ENCODE measurements at regions of chr4 and their contacts with region 1.

Region 1: GRCh38 chr4:169270810-169271691 is at the start of gene SH3RF1:
- DNase-seq: peak; percentile 82
- ATAC-seq: peak; percentile 88
- H3K4me3 ChIP-seq: peak within 1 kb of the TSS; percentile 94
- H3K27ac ChIP-seq: peak within 1 kb of the TSS; percentile 84
- H3K4me1 ChIP-seq: peaks cover 9% of the 10 kb centered on the region
- H3K27me3 ChIP-seq: no peaks in the 10 kb centered on the region
- CTCF ChIP-seq: peak; percentile 45
- POLR2A ChIP-seq: peak; percentile 95
- RAD21 ChIP-seq: peak; percentile 53
- total RNA-seq, gene SH3RF1: 29.8 and 30.0 TPM in 2 replicates

Region 2: GRCh38 chr4:169010125-169011023 is 260.7 kb before region 1 on chr4 and contains the start of gene CBR4:
- CTCF ChIA-PET with region 1: interaction called, 4 read pairs
- POLR2A ChIA-PET with region 1: interaction called, 10 read pairs
- dilution Hi-C with region 1: no loop called
- in situ Hi-C with region 1: loop called (anchors 10 kb)
- intact Hi-C with region 1: no loop called
- DNase-seq: peak; percentile 99
- ATAC-seq: peak; percentile 98
- H3K4me3 ChIP-seq: peak within 1 kb of the TSS; percentile 78
- H3K27ac ChIP-seq: peak within 1 kb of the TSS; percentile 87
- H3K4me1 ChIP-seq: peaks cover 4% of the 10 kb centered on the region
- H3K27me3 ChIP-seq: no peaks in the 10 kb centered on the region
- CTCF ChIP-seq: peak; percentile 40
- POLR2A ChIP-seq: peak; percentile 86
- RAD21 ChIP-seq: peak; percentile 28
- total RNA-seq, gene CBR4: 4.5 and 9.2 TPM in 2 replicates

Region 3: DNA sequence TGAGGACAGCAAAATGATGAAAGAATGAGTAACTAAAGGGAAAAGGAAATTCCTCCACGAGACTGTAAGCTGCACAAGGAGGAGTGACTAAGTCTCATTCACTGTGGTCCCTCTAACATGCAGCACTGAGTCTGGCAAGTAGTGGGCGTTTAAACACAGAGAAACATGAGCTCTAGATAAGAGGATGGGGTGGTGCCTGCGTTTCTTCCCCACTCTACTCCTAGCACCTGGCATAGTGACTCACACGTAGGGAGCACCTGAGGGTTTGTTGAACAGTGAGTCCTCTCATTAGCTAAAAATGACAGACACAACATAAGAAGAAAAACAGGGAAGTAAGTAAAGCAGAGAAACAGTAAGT is 155.2 kb before region 1 on chr4:
- CTCF ChIA-PET with region 1: interaction called, 3 read pairs
- POLR2A ChIA-PET with region 1: no interaction called
- dilution Hi-C with region 1: no loop called
- in situ Hi-C with region 1: no loop called
- intact Hi-C with region 1: loop called (anchors 2 kb)
- DNase-seq: peak; percentile 99
- ATAC-seq: peak; percentile 97
- H3K4me3 ChIP-seq: no peak overlapping the region
- H3K27ac ChIP-seq: peak overlapping the region; percentile 71; the same call in 1 of the 2 replicates
- H3K4me1 ChIP-seq: peaks cover 18% of the 10 kb centered on the region
- H3K27me3 ChIP-seq: no peaks in the 10 kb centered on the region
- CTCF ChIP-seq: peak; percentile 49
- POLR2A ChIP-seq: peak; percentile 34; the same call in 1 of the 2 replicates
- RAD21 ChIP-seq: peak; percentile 60

Region 4: DNA sequence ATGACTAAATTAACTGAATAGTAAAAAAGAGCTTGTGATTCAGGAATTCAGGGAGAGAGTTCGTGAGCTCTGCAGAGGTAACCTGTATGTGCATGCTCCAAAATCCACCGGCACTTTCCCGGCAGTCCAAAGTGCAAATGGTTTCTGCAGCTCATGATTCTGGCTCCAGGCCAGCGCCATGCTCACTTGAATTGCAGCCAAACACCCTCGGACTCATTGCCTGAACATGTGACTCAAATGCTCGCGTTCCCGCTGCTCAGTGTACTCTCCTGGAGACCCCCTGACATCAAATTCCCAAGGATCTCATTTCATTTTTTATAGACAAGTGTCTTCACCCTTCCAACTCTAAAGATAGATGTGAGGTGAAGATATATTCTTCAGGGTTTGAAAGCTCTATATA is 43.9 kb after region 1 on chr4:
- CTCF ChIA-PET with region 1: no interaction called
- POLR2A ChIA-PET with region 1: interaction called, 7 read pairs
- dilution Hi-C with region 1: no loop called
- in situ Hi-C with region 1: no loop called
- intact Hi-C with region 1: loop called (anchors 5 kb)
- DNase-seq: peak; percentile 70
- ATAC-seq: peak; percentile 8; the same call in 1 of the 2 replicates
- H3K4me3 ChIP-seq: no peak overlapping the region
- H3K27ac ChIP-seq: no peak overlapping the region
- H3K4me1 ChIP-seq: peaks cover 8% of the 10 kb centered on the region
- H3K27me3 ChIP-seq: no peaks in the 10 kb centered on the region
- CTCF ChIP-seq: no peak
- POLR2A ChIP-seq: no peak
- RAD21 ChIP-seq: no peak

Region 5: DNA sequence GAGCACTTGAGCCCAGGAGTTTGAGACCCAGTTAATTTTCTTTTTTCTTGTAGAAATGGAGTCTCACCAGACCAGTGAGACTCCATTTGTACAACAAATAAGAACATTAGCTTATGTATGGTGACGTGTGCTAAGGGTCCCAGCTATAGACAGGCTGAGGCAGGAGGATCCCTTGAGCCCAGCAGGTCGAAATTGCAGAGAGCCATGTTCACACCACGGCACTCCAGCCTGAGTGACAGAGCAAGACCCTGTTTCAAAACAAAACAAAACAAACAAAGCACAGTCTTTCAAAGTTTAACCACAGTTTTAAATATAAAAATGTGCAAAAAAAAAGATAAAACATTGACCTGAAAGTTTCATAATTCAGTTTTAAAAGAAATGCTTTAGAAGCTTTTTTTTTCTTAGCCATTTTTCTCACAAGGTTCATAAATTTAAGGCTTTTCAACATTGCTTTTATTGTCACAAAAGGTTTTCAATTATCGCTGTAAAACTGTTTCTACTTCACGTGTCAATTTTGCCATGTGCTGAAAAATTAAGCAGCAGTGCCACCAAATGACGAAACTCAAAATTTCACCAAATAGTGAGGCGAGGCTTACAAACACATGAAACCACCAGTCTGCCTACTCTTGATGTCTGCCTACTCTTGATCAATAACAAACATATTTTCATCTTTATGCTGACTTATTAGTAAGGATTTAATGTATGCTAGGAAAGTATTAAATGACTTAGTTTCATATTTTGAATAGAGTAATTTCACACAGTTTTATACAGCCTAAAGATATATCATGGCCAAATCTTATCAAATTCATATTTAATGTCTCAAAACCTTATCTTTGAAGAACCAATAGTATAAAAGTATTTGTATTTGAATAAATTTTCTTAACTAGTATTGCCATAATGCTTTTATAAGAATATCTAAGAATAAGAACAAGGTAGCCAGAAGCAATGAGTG is 215.0 kb after region 1 on chr4:
- CTCF ChIA-PET with region 1: no interaction called
- POLR2A ChIA-PET with region 1: no interaction called
- dilution Hi-C with region 1: no loop called
- in situ Hi-C with region 1: loop called (anchors 10 kb)
- intact Hi-C with region 1: loop called (anchors 1 kb)
- DNase-seq: peak; percentile 71
- ATAC-seq: peak; percentile 70
- H3K4me3 ChIP-seq: no peak overlapping the region
- H3K27ac ChIP-seq: no peak overlapping the region; the same call in 1 of the 2 replicates
- H3K4me1 ChIP-seq: peaks cover 3% of the 10 kb centered on the region
- H3K27me3 ChIP-seq: no peaks in the 10 kb centered on the region
- CTCF ChIP-seq: peak; percentile 77
- POLR2A ChIP-seq: no peak
- RAD21 ChIP-seq: peak; percentile 86